CD8-positive, alpha-beta T cell (primary cell): ENCODE measurements at regions of chr10 and their contacts with region 1.

Region 1: DNA sequence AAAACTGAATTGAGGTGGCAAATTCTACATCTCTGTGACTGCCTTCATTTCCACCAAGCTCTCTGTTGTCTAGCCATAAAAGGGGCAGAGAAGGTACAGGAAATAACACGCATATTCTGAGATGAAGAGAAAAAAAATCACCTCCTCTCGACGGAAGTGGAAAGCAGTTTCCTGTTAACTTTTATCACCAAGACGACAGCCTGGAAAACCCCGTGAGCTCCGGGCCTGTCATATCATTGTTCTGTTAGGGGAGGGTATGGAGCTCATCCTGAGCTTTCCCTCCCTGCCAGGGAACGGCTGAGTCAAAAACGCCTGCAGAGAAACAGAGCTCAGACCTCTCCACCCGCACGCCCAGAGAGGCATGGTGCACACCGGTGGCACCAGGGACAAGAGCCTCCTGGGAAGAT is 200.3 kb downstream of the PRPF18 start:
- DNase-seq: peak; percentile 54 to 97 (median 75)
- ATAC-seq: peak; percentile 85
- H3K4me3 ChIP-seq: peak overlapping the region; percentile 23 to 28
- H3K4me3 Mint-ChIP-seq: peak overlapping the region; percentile 82
- H3K27ac ChIP-seq: peak overlapping the region; percentile 82 to 97
- H3K27ac Mint-ChIP-seq: no peak overlapping the region
- H3K4me1 ChIP-seq: peaks cover 47% of the 10 kb centered on the region
- H3K4me1 Mint-ChIP-seq: peaks cover 32% of the 10 kb centered on the region
- H3K27me3 ChIP-seq: no peaks in the 10 kb centered on the region
- H3K27me3 Mint-ChIP-seq: no peaks in the 10 kb centered on the region
- CTCF ChIP-seq: no peak

Region 2: GRCh38 chr10:13299437-13300287 is 487.4 kb before region 1 on chr10 and contains the start of gene PHYH:
- CTCF ChIA-PET with region 1: no interaction called
- POLR2A ChIA-PET with region 1: interaction called, 4 read pairs
- intact Hi-C with region 1: loop called in 1 of 2 experiments (anchors 2 kb)
- DNase-seq: peak; percentile 65 to 93 (median 80)
- ATAC-seq: peak; percentile 52
- H3K4me3 ChIP-seq: peak within 1 kb of the TSS; percentile 68 to 70
- H3K4me3 Mint-ChIP-seq: peak within 1 kb of the TSS; percentile 84
- H3K27ac ChIP-seq: peak within 1 kb of the TSS; percentile 81 to 91
- H3K27ac Mint-ChIP-seq: peak within 1 kb of the TSS; percentile 94
- H3K4me1 ChIP-seq: peaks cover 28% of the 10 kb centered on the region
- H3K4me1 Mint-ChIP-seq: peaks cover 26% of the 10 kb centered on the region
- H3K27me3 ChIP-seq: no peaks in the 10 kb centered on the region
- H3K27me3 Mint-ChIP-seq: no peaks in the 10 kb centered on the region
- CTCF ChIP-seq: no peak
- total RNA-seq, gene PHYH: 12.6 TPM

Region 3: DNA sequence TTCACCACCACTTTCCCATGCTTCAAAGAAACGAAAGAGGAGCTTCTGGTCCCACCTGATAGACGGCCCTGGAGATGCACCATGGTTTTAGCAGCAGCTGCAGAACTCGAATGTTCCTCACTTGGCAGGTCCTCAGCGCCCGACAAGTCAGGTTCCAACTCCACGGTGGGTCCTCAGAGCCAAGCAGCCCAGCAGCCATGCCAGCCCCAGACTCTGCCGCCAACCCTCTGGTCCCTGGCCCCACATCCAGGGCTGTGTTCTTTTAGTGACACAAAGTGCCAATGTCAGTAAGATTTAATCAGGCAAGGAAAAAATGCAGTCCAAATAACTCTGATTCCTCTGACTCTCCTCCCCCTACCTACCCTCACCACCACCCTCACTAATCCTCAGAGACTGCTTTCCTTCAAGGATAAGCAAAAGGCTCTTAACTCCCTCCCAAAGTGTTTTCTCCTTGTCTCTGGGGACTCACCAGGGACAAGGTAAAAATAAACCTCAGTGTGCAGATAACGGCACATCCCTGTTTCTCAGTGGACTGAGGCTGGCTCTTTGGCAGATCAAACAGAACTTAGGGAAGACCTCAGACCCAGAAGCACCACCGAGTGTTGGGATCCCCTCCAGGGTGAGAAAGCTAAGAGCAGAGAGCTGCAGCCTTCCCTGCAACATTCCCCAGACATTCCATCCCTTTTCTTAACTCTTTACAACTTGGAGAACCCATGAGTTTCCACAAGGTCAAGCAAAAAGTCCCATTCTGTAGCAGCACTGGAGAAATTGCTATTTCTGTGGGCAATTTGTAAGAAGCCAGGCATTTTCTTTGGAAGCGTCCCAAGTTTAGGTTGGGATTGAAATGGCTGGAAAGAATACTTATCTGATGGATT is 184.8 kb after region 1 on chr10:
- CTCF ChIA-PET with region 1: no interaction called
- POLR2A ChIA-PET with region 1: no interaction called
- intact Hi-C with region 1: no loop called
- DNase-seq: no peak
- ATAC-seq: no peak
- H3K4me3 ChIP-seq: no peak overlapping the region
- H3K4me3 Mint-ChIP-seq: no peak overlapping the region
- H3K27ac ChIP-seq: no peak overlapping the region
- H3K27ac Mint-ChIP-seq: no peak overlapping the region
- H3K4me1 ChIP-seq: no peaks in the 10 kb centered on the region
- H3K4me1 Mint-ChIP-seq: no peaks in the 10 kb centered on the region
- H3K27me3 ChIP-seq: no peaks in the 10 kb centered on the region
- H3K27me3 Mint-ChIP-seq: no peaks in the 10 kb centered on the region
- CTCF ChIP-seq: no peak

Region 4: DNA sequence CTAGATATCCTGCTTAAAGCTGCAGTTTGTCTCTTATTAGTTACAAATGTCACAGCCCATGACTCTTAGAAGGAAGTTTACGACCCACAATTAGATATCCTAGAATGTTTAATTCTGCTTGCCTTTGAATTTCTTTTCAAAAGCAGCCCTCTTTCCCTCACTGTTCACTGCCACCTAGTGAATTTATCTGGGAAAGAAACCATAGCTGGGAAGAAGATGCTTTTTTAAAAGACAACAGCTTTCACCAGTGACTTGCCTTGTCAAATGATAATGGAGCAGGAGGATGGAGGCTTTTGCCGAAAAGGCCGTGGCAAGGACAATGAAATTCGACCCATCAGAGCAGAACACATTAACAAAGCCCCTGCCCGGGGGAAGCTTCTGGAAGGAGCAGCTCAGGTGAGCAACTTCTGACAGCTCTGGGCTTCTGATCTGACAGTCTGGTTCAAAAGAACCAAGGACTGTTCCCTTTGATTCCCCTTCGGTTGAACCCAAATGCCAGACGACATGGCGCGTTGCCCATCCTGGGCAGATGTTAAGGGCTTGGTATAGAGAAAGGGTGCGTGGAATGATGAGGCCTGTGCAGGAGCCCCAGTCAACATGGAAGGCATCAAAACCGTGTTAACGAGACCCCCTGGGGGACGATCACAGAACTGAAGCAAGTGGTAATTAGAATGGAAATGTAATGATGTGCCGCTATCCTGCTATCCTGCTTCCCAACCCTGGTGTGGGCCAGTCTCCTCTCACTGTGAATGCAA is 306.9 kb after region 1 on chr10:
- CTCF ChIA-PET with region 1: interaction called, 5 read pairs
- POLR2A ChIA-PET with region 1: no interaction called
- intact Hi-C with region 1: loop called in 1 of 2 experiments (anchors 1 kb)
- DNase-seq: peak in 1 of 9 experiments; percentile 15
- ATAC-seq: no peak
- H3K4me3 ChIP-seq: no peak overlapping the region
- H3K4me3 Mint-ChIP-seq: no peak overlapping the region
- H3K27ac ChIP-seq: no peak overlapping the region
- H3K27ac Mint-ChIP-seq: no peak overlapping the region
- H3K4me1 ChIP-seq: no peaks in the 10 kb centered on the region
- H3K4me1 Mint-ChIP-seq: no peaks in the 10 kb centered on the region
- H3K27me3 ChIP-seq: no peaks in the 10 kb centered on the region
- H3K27me3 Mint-ChIP-seq: no peaks in the 10 kb centered on the region
- CTCF ChIP-seq: peak; percentile 25

Region 5: DNA sequence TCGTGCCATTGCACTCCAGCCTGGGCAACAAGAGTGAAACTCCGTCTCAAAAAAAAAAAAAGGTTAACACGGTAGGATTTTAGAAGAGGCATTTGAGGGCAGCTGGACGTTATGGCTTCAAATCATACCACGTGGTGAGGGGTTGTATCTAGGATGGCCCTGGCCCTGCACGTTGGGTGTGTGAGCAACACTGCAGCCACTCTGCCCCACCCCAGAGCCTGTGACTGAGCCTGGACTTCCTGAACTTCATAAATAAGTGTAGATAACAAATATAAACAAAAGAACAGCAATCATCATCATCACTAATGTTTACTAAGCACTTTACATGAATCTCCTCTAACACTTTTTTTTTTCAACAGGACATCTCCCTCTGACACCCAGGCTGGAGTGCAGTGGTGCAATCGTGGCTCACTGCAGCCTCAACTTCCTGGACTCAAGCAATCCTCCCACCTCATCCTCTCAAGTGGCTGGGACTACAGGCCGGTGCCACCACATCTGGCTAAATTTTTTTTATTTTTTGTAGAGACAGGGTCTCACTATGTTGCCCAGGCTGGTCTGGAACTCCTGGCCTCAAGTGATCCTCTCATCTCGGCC is 713.3 kb after region 1 on chr10:
- CTCF ChIA-PET with region 1: no interaction called
- POLR2A ChIA-PET with region 1: no interaction called
- intact Hi-C with region 1: loop called in 1 of 2 experiments (anchors 5 kb)
- DNase-seq: no peak
- ATAC-seq: no peak
- H3K4me3 ChIP-seq: no peak overlapping the region
- H3K4me3 Mint-ChIP-seq: no peak overlapping the region
- H3K27ac ChIP-seq: no peak overlapping the region
- H3K27ac Mint-ChIP-seq: no peak overlapping the region
- H3K4me1 ChIP-seq: peaks cover 9% of the 10 kb centered on the region
- H3K4me1 Mint-ChIP-seq: peaks cover 6% of the 10 kb centered on the region
- H3K27me3 ChIP-seq: no peaks in the 10 kb centered on the region
- H3K27me3 Mint-ChIP-seq: no peaks in the 10 kb centered on the region
- CTCF ChIP-seq: no peak

Region 6: GRCh38 chr10:14648005-14648765 is 861.2 kb after region 1 on chr10:
- CTCF ChIA-PET with region 1: no interaction called
- POLR2A ChIA-PET with region 1: no interaction called
- intact Hi-C with region 1: loop called in 1 of 2 experiments (anchors 5 kb)
- DNase-seq: peak; percentile 52 to 92 (median 74)
- ATAC-seq: peak; percentile 86
- H3K4me3 ChIP-seq: peak overlapping the region; percentile 41 to 50
- H3K4me3 Mint-ChIP-seq: peak overlapping the region; percentile 86
- H3K27ac ChIP-seq: peak overlapping the region; percentile 89 to 94
- H3K27ac Mint-ChIP-seq: peak overlapping the region; percentile 99
- H3K4me1 ChIP-seq: peaks cover 26% of the 10 kb centered on the region
- H3K4me1 Mint-ChIP-seq: peaks cover 48% of the 10 kb centered on the region
- H3K27me3 ChIP-seq: no peaks in the 10 kb centered on the region
- H3K27me3 Mint-ChIP-seq: no peaks in the 10 kb centered on the region
- CTCF ChIP-seq: no peak

Region 7: DNA sequence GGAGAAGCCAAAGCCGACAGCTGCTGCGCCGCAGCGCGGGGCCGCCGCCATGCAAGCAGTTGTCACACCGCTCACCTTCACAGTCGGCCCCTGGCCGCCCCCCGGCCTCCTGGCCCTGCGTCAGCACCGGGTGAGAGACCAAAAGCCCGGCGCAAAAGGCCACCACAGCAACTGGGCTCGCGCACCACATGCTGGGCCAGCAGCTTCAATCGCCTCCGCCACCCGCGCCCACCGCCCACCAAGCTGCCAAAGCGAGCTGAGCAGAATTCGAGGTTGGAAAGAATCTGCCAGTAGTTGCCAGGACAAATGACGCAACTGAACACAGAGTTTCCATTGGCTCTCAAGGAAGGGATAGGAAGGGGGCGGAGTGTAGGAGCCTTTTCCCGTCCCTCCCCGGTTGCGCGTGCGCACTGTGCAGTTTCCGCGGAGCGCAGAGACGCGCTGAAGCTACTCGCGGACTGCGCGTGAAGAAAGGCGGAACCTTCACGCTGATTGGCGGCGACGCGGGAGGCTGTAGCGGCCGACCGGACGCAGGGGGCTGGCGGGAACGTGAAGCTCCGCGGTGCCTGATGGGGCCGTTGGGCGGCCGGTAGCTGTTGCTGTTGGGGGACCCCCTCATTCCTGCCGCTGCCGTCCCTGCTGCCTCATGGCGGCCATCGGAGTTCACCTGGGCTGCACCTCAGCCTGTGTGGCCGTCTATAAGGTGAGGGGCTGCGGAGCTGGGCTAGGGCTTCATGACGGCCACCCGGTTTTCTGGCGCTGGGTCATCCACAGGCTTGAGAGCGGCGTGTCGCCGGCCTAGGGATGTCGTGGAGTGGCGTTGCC is 1051.0 kb after region 1 on chr10 and contains the starts of genes CDNF, HSPA14 and MSANTD7:
- CTCF ChIA-PET with region 1: interaction called, 3 read pairs
- POLR2A ChIA-PET with region 1: no interaction called
- intact Hi-C with region 1: loop called in 1 of 2 experiments (anchors 1 kb)
- DNase-seq: peak; percentile 98 to 100 (median 99)
- ATAC-seq: peak; percentile 95
- H3K4me3 ChIP-seq: peak within 1 kb of the TSS; percentile 90 to 96
- H3K4me3 Mint-ChIP-seq: peak within 1 kb of the TSS; percentile 98
- H3K27ac ChIP-seq: peak within 1 kb of the TSS; percentile 86 to 94
- H3K27ac Mint-ChIP-seq: peak within 1 kb of the TSS; percentile 99
- H3K4me1 ChIP-seq: peaks cover 17% of the 10 kb centered on the region
- H3K4me1 Mint-ChIP-seq: peaks cover 32% of the 10 kb centered on the region
- H3K27me3 ChIP-seq: no peaks in the 10 kb centered on the region
- H3K27me3 Mint-ChIP-seq: no peaks in the 10 kb centered on the region
- CTCF ChIP-seq: no peak
- total RNA-seq, gene CDNF: 2.3 to 2.5 TPM
- total RNA-seq, gene HSPA14: 37.7 to 37.8 TPM
- total RNA-seq, gene MSANTD7: 20.2 to 22.3 TPM

Region 8: GRCh38 chr10:15097011-15097812 is 1310.2 kb after region 1 on chr10 and contains the start of gene RPP38:
- CTCF ChIA-PET with region 1: no interaction called
- POLR2A ChIA-PET with region 1: no interaction called
- intact Hi-C with region 1: loop called (anchors 5 to 10 kb)
- DNase-seq: peak; percentile 85 to 98 (median 95)
- ATAC-seq: peak; percentile 83
- H3K4me3 ChIP-seq: peak within 1 kb of the TSS; percentile 74 to 88
- H3K4me3 Mint-ChIP-seq: peak within 1 kb of the TSS; percentile 97
- H3K27ac ChIP-seq: peak within 1 kb of the TSS; percentile 92 to 96
- H3K27ac Mint-ChIP-seq: peak within 1 kb of the TSS; percentile 97
- H3K4me1 ChIP-seq: peaks cover 28% of the 10 kb centered on the region
- H3K4me1 Mint-ChIP-seq: peaks cover 35% of the 10 kb centered on the region
- H3K27me3 ChIP-seq: no peaks in the 10 kb centered on the region
- H3K27me3 Mint-ChIP-seq: no peaks in the 10 kb centered on the region
- CTCF ChIP-seq: no peak
- total RNA-seq, gene RPP38: 10.6 to 12.3 TPM

Region 9: DNA sequence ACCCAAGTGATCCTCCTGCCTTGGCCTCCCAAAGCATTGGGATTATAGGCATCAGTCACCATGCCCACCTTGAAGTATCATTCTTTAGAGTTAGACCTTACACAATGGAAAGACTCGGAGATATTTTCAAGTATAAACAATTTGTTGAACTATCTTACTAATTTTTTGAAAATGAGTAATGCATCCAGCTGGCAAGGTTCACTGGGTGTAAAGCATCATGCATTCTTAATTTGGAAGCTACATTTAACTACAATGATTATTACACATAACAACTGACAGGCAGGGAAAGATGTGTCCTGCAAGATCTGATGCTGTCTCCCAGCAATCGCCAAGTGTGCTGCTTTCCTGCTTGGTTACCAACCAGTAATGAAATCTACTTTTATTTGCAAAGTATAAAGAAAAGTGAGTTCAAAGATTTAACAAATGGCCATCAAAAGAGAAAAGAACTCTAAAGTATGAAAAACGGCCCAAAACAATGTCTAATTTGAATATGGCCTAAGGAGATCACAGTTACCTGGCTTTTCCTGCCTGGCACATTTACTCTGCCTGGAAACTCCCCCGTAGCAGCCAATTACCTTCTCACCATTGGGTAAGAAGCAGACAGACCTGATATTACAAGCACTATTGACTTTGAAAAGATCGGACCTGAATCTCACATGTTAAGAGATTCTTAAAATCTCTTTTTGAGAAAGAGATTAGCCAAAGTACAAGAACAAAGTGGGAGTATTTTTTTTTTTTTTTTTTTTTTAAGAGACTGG is 1440.8 kb after region 1 on chr10:
- CTCF ChIA-PET with region 1: no interaction called
- POLR2A ChIA-PET with region 1: no interaction called
- intact Hi-C with region 1: no loop called
- DNase-seq: no peak
- ATAC-seq: no peak
- H3K4me3 ChIP-seq: no peak overlapping the region
- H3K4me3 Mint-ChIP-seq: no peak overlapping the region
- H3K27ac ChIP-seq: no peak overlapping the region
- H3K27ac Mint-ChIP-seq: no peak overlapping the region
- H3K4me1 ChIP-seq: no peaks in the 10 kb centered on the region
- H3K4me1 Mint-ChIP-seq: peaks cover 2% of the 10 kb centered on the region
- H3K27me3 ChIP-seq: no peaks in the 10 kb centered on the region
- H3K27me3 Mint-ChIP-seq: no peaks in the 10 kb centered on the region
- CTCF ChIP-seq: no peak